Activated T-helper 1 cell treated with anti-CD3 and anti-CD28 coated beads, Interleukin-12 subunit alpha, Interleukin-12 subunit beta, Interleukin-2, Interleukin-4 antibody, amounts not matched to agents 30 ng/mL and 10 ng/mL and 1 ng/mL, durations not matched to agents 14 hours and 24 hours and 36 hours (primary cell): ENCODE measurements at regions of chr9 and their contacts with region 1.

Region 1: GRCh38 chr9:97615439-97616072 is 17.6 kb downstream of the TSTD2 start:
- DNase-seq: peak; percentile 40
- H3K4me3 Mint-ChIP-seq: no peak overlapping the region
- H3K27ac Mint-ChIP-seq: no peak overlapping the region
- H3K4me1 Mint-ChIP-seq: peaks cover 16% of the 10 kb centered on the region
- H3K27me3 Mint-ChIP-seq: no peaks in the 10 kb centered on the region

Region 2: GRCh38 chr9:96738147-96739027 is 877.2 kb before region 1 on chr9:
- intact Hi-C with region 1: no loop called
- DNase-seq: no peak
- H3K4me3 Mint-ChIP-seq: no peak overlapping the region
- H3K27ac Mint-ChIP-seq: no peak overlapping the region
- H3K4me1 Mint-ChIP-seq: no peaks in the 10 kb centered on the region
- H3K27me3 Mint-ChIP-seq: no peaks in the 10 kb centered on the region

Region 3: GRCh38 chr9:97293207-97293721 is 322.3 kb before region 1 on chr9:
- intact Hi-C with region 1: no loop called
- DNase-seq: no peak
- H3K4me3 Mint-ChIP-seq: no peak overlapping the region
- H3K27ac Mint-ChIP-seq: no peak overlapping the region
- H3K4me1 Mint-ChIP-seq: no peaks in the 10 kb centered on the region
- H3K27me3 Mint-ChIP-seq: no peaks in the 10 kb centered on the region

Region 4: DNA sequence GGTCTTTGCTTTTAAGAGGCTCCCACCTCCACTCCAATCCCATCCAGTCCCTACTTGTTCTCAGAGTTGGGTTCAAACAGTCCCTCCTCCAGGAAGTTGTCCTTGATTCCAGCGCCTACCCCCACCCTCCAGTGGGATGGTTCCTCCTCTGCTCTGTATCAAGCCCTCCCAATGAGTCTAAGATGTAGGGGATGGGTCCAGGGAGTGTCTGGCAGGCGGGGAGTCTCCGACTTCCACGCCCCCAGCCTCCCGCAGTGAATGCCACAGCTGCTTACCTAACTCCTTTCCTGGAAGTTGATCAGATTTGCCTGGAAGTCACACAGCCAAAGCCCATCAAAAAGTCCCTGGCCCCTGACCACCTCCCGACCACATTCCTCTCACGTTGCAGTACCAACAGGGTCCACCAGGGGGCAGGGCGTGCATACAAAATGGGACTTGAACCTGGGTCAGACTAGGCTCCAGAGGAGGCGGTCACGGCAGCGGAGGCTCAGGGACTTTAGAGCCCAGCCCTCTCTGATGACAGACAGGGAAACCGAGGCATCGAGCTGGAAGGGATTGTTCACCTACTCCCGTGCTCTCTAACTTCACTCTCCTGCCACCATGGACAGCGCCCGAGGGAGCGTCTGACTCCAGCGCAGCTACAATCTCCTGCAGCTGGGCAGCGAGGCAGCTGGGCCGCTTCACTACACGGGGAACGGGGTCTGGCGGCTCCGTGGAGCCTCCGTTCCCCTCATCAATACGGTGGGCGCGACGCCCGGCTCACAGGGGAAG is 228.6 kb before region 1 on chr9:
- intact Hi-C with region 1: loop called (anchors 1 kb)
- DNase-seq: peak; percentile 63
- H3K4me3 Mint-ChIP-seq: no peak overlapping the region
- H3K27ac Mint-ChIP-seq: no peak overlapping the region
- H3K4me1 Mint-ChIP-seq: peaks cover 41% of the 10 kb centered on the region
- H3K27me3 Mint-ChIP-seq: peaks cover 33% of the 10 kb centered on the region

Region 5: GRCh38 chr9:97411789-97412625 is 203.5 kb before region 1 on chr9 and contains the start of gene TDRD7:
- intact Hi-C with region 1: loop called (anchors 1 kb)
- DNase-seq: peak; percentile 87
- H3K4me3 Mint-ChIP-seq: peak within 1 kb of the TSS; percentile 84
- H3K27ac Mint-ChIP-seq: peak within 1 kb of the TSS; percentile 61
- H3K4me1 Mint-ChIP-seq: peaks cover 35% of the 10 kb centered on the region
- H3K27me3 Mint-ChIP-seq: peaks cover 34% of the 10 kb centered on the region
- total RNA-seq, gene TDRD7: 4.7 TPM in 2 replicates

Region 6: GRCh38 chr9:97468658-97469448 is 146.7 kb before region 1 on chr9:
- intact Hi-C with region 1: loop called (anchors 1 kb)
- DNase-seq: peak; percentile 4
- H3K4me3 Mint-ChIP-seq: no peak overlapping the region
- H3K27ac Mint-ChIP-seq: no peak overlapping the region
- H3K4me1 Mint-ChIP-seq: no peaks in the 10 kb centered on the region
- H3K27me3 Mint-ChIP-seq: no peaks in the 10 kb centered on the region